IMR-90 (cell line): ENCODE measurements at regions of chr10 and their contacts with region 1.

Region 1: GRCh38 chr10:29535012-29535777 is 99.6 kb downstream of the SVIL start:
- DNase-seq: peak; percentile 88
- ATAC-seq: peak; percentile 97
- H3K4me3 ChIP-seq: peak overlapping the region; percentile 16; the same call in 1 of the 2 replicates
- H3K27ac ChIP-seq: peak overlapping the region; percentile 18
- H3K4me1 ChIP-seq: peaks cover 2% of the 10 kb centered on the region; the same call in 1 of the 2 replicates
- H3K27me3 ChIP-seq: no peaks in the 10 kb centered on the region
- CTCF ChIP-seq: peak; percentile 77
- POLR2A ChIP-seq: peak; percentile 40; the same call in 1 of the 2 replicates
- RAD21 ChIP-seq: peak; percentile 41

Region 2: DNA sequence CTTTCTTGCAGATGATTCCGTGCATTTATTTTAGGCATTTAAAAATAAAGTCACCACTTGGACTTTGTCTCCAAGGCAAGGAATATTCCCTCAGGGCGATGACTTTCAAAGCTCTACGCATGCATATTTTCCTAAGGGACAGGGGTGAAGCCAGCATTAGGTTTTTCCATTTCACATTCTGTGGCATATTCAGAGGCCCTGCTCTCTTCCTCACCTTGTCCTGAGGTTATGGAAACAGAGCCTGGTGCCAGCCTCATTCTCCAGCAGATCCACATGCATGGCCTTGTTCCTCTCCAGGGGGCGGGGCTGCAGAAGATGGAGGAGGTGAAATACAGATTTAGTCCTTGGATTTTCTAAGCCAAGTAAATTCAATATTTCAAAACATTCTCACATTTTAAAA is 257.9 kb before region 1 on chr10:
- CTCF ChIA-PET with region 1: no interaction called
- POLR2A ChIA-PET with region 1: no interaction called
- dilution Hi-C with region 1: no loop called
- in situ Hi-C with region 1: no loop called
- intact Hi-C with region 1: no loop called
- DNase-seq: no peak
- ATAC-seq: no peak
- H3K4me3 ChIP-seq: no peak overlapping the region
- H3K27ac ChIP-seq: no peak overlapping the region
- H3K4me1 ChIP-seq: no peaks in the 10 kb centered on the region
- H3K27me3 ChIP-seq: peaks cover 42% of the 10 kb centered on the region
- CTCF ChIP-seq: no peak
- POLR2A ChIP-seq: no peak
- RAD21 ChIP-seq: no peak

Region 3: DNA sequence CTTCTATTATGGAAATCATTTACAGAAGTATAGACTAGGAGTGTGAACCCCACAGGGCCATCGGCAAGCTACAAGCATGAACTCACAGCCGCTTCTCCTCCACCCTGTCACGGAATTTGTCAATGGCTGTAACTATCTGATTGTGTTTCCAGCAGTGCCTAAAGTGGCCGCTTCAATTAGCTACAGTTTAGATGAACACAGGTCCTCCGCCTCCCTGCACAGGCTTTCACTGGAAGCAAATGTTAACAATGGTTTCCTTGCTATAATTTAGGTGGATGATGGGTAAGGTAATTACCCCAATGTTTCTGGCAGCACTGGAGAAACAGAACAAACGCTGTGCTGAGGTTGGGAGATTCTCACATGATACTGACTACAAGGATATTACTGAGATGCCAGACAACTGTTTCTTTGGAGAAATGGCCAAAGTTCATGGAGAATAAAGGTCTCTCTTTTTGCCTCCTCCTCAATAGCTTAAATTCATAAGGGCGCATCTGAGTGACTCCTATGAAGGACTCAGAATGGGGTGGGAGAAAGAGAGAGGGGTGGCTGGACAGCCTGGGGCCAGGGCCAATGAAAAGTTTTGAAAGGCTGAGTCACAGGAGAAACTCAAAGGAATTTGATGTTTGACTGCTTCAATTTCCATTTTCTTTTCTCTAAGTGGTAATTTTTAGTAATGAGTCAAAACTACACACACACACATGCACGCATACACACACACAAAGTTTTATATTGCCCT is 20.7 kb after region 1 on chr10:
- CTCF ChIA-PET with region 1: interaction called, 16 read pairs
- POLR2A ChIA-PET with region 1: no interaction called
- dilution Hi-C with region 1: no loop called
- in situ Hi-C with region 1: no loop called
- intact Hi-C with region 1: no loop called
- DNase-seq: peak; percentile 85
- ATAC-seq: peak; percentile 97
- H3K4me3 ChIP-seq: no peak overlapping the region
- H3K27ac ChIP-seq: peak overlapping the region; percentile 45
- H3K4me1 ChIP-seq: peaks cover 13% of the 10 kb centered on the region
- H3K27me3 ChIP-seq: no peaks in the 10 kb centered on the region
- CTCF ChIP-seq: no peak
- POLR2A ChIP-seq: no peak
- RAD21 ChIP-seq: no peak

Region 4: GRCh38 chr10:29590915-29591650 is 55.9 kb after region 1 on chr10:
- CTCF ChIA-PET with region 1: interaction called, 3 read pairs
- POLR2A ChIA-PET with region 1: no interaction called
- dilution Hi-C with region 1: no loop called
- in situ Hi-C with region 1: no loop called
- intact Hi-C with region 1: loop called (anchors 5 kb)
- DNase-seq: no peak
- ATAC-seq: no peak
- H3K4me3 ChIP-seq: no peak overlapping the region
- H3K27ac ChIP-seq: no peak overlapping the region
- H3K4me1 ChIP-seq: peaks cover 27% of the 10 kb centered on the region
- H3K27me3 ChIP-seq: no peaks in the 10 kb centered on the region
- CTCF ChIP-seq: no peak
- POLR2A ChIP-seq: no peak
- RAD21 ChIP-seq: no peak

Region 5: DNA sequence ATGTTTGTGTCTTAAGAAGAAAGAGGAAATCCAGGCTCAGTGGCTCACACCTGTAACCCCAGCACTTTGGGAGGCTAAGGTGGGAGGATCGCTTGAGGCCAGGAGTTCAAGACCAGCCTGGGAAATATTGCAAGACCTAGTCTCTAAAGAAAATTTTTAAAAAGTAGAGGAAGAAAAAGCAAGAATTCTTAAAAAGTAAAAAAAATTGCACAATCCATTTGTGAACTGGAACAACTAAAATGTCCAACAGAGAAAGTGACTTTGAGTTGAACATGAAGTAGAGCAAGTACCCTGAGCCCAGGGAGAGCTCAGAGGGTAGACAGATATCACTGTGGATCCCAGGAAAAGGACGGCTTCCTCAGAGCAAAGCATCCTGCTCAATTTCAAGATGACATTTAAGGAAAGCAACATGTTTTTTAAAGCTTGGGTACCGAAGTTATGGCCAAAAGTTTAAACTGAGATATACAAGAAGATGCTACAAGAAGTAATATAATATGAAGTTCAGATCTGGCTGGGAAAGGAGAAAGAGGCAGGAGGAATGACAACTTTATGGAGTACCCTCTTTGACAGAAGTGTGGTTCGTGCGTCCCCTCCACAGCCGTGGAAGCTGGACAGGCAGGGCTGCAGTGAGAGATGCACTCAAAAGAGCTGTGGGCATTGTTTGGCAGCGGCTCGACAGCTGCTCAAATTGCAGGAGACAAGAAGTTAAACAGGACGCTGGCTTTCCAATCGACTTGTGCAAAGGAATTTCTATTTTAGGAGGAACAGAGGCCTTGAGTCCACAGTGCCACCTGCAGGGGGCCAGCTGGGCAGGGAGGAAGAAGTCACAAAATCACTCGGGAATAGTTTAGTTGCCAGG is 322.9 kb after region 1 on chr10:
- CTCF ChIA-PET with region 1: no interaction called
- POLR2A ChIA-PET with region 1: no interaction called
- dilution Hi-C with region 1: no loop called
- in situ Hi-C with region 1: no loop called
- intact Hi-C with region 1: loop called (anchors 10 kb)
- DNase-seq: peak; percentile 82
- ATAC-seq: peak; percentile 91
- H3K4me3 ChIP-seq: no peak overlapping the region
- H3K27ac ChIP-seq: peak overlapping the region; percentile 23; the same call in 1 of the 2 replicates
- H3K4me1 ChIP-seq: peaks cover 9% of the 10 kb centered on the region
- H3K27me3 ChIP-seq: no peaks in the 10 kb centered on the region
- CTCF ChIP-seq: peak; percentile 81
- POLR2A ChIP-seq: 0 out of 2 replicates have a peak, but pooled peaks have one; percentile 24
- RAD21 ChIP-seq: peak; percentile 81